ENCODE measurements at regions of chr17 and their contacts with region 1.

Region 1: DNA sequence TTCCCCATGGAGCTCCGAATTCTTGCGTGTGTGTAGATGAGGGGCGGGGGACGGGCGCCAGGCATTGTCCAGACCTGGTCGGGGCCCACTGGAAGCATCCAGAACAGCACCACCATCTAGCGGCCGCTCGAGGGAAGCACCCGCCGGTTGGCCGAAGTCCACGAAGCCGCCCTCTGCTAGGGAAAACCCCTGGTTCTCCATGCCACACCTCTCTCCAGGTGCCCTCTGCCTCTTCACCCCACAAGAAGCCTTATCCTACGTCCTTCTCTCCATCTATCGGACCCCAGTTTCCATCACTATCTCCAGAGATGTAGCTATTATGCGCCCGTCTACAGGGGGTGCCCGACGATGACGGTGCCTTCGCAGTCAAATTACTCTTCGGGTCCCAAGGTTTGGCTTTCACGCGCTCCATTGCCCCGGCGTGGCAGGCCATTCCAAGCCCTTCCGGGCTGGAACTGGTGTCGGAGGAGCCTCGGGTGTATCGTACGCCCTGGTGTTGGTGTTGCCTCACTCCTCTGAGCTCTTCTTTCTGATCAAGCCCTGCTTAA is 617 bp upstream of the SENP3 start:
- DNase-seq: peak; percentile 91
- ATAC-seq: peak; percentile 74
- H3K4me3 Mint-ChIP-seq: peak overlapping the region; percentile 77
- H3K27ac Mint-ChIP-seq: peak overlapping the region; percentile 87
- H3K4me1 Mint-ChIP-seq: peaks cover 63% of the 10 kb centered on the region
- H3K27me3 Mint-ChIP-seq: no peaks in the 10 kb centered on the region

Region 2: GRCh38 chr17:7435221-7435675 is 125.9 kb before region 1 on chr17 and contains the start of gene TMEM102:
- CTCF ChIA-PET with region 1: interaction called, 69 read pairs
- POLR2A ChIA-PET with region 1: interaction called, 4 read pairs
- DNase-seq: peak; percentile 99
- ATAC-seq: peak; percentile 73
- H3K4me3 Mint-ChIP-seq: peak within 1 kb of the TSS; percentile 95
- H3K27ac Mint-ChIP-seq: peak within 1 kb of the TSS; percentile 98
- H3K4me1 Mint-ChIP-seq: peaks cover 38% of the 10 kb centered on the region
- H3K27me3 Mint-ChIP-seq: peaks cover 10% of the 10 kb centered on the region
- total RNA-seq, gene TMEM102: 16.5 to 18.1 TPM

Region 3: GRCh38 chr17:7484067-7484918 is 76.8 kb before region 1 on chr17 and contains the start of gene POLR2A:
- CTCF ChIA-PET with region 1: interaction called, 37 read pairs
- POLR2A ChIA-PET with region 1: interaction called, 30 read pairs
- DNase-seq: peak; percentile 97
- ATAC-seq: peak; percentile 64
- H3K4me3 Mint-ChIP-seq: peak within 1 kb of the TSS; percentile 94
- H3K27ac Mint-ChIP-seq: peak within 1 kb of the TSS; percentile 99
- H3K4me1 Mint-ChIP-seq: peaks cover 63% of the 10 kb centered on the region
- H3K27me3 Mint-ChIP-seq: no peaks in the 10 kb centered on the region
- total RNA-seq, gene POLR2A: 183 to 185 TPM

Region 4: DNA sequence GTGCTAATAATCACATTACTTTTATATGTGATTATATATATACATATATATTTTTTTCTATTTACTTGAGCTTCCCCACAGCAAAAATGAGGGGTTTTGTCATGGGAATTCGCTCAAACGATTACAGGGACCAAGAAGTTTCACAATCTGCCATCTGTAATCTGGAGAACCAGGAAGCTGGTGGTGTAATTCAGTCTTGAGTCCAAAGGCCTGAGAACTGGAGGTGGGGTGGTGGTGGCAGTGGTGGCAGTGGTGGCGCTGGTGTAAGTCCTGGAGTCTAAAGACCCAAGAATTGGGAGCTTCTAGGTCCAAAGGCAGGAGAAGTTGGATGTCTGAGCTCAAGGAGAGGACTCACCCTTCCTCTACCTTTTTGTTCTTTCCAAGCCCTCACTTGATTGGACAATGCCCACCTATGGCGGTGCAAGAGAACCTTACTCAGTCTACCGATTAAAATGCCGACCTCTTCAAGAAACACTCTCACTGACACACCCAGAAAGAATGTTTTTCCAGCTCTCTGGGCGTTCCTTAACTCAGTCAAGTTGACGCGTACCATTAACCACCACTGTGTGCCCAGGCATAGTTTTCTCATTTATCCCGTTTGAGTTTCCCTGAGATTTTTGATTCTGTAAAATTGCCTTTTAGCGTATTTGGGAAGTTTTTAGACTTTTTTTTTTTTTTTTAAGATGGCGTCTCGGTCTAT is 45.0 kb before region 1 on chr17:
- CTCF ChIA-PET with region 1: interaction called, 264 read pairs
- POLR2A ChIA-PET with region 1: interaction called, 32 read pairs
- DNase-seq: no peak
- ATAC-seq: no peak
- H3K4me3 Mint-ChIP-seq: no peak overlapping the region
- H3K27ac Mint-ChIP-seq: no peak overlapping the region
- H3K4me1 Mint-ChIP-seq: peaks cover 4% of the 10 kb centered on the region
- H3K27me3 Mint-ChIP-seq: no peaks in the 10 kb centered on the region

Region 5: GRCh38 chr17:7548585-7549400 is 12.3 kb before region 1 on chr17 and contains the start of gene TNFSF12:
- CTCF ChIA-PET with region 1: interaction called, 44 read pairs
- POLR2A ChIA-PET with region 1: interaction called, 14 read pairs
- DNase-seq: peak; percentile 80
- ATAC-seq: peak; percentile 70
- H3K4me3 Mint-ChIP-seq: peak within 1 kb of the TSS; percentile 88
- H3K27ac Mint-ChIP-seq: peak within 1 kb of the TSS; percentile 92
- H3K4me1 Mint-ChIP-seq: peaks cover 57% of the 10 kb centered on the region
- H3K27me3 Mint-ChIP-seq: no peaks in the 10 kb centered on the region
- total RNA-seq, gene TNFSF12: 93.7 to 100 TPM

Region 6: DNA sequence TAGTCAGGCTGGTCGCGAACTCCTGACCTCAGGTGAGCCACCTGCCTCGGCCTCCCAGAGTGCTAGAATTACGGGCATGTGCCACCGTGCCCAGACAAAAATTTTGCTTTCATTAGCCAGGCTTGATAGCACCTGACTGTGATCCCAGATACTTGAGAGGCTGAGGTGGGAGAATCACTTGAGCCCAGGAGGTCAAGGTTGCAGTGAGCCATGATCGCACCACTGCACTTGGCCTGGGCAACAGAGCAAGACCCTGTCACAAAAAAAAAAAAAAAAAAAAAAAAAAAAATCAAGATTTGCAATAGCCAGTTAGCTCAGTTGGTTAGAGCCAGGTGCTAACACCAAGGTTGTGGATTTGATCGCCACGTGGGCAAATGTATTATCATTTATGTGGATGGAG is 59.7 kb after region 1 on chr17:
- CTCF ChIA-PET with region 1: no interaction called
- POLR2A ChIA-PET with region 1: no interaction called
- DNase-seq: no peak
- ATAC-seq: no peak
- H3K4me3 Mint-ChIP-seq: no peak overlapping the region
- H3K27ac Mint-ChIP-seq: no peak overlapping the region
- H3K4me1 Mint-ChIP-seq: no peaks in the 10 kb centered on the region
- H3K27me3 Mint-ChIP-seq: peaks cover 2% of the 10 kb centered on the region

Measured in activated CD8-positive, alpha-beta T cell treated with anti-CD3 and anti-CD28 coated beads, Interleukin-2, amount 10 ng/mL, durations not matched to agents 7 days and 5 days (primary cell).